GM13976 (cell line): ENCODE measurements at regions of chr15 and their contacts with region 1.

Region 1: DNA sequence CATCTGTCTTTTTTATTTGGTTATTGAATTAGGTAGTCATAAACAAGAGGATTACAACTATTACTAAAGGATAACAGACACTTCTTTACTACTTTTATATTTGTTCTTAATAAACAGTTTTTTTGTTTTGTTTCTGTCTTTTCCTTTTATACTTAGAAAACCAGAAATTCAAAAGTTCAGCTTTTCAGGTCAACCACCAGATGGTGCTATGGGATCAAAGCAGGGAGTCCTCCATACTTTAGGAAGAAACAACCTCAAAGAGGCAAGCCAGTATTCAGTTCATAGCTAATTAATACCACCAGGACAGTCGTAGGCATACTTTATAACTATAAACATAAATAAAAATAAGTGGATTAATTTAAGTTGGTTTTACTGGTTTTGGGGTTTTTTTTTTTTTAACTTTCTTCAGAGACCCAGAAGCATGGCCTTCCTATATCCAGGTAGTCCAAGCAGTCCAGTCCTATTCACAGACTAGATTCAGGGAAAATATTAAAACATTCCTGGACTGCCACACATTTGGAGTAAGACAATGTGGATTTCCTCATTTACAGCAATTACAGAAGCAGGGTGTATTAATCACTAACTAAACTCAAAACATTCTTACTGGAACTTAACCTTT is 16.0 kb upstream of the EID1 start:
- DNase-seq: peak; percentile 59
- CTCF ChIP-seq: peak; percentile 55

Region 2: DNA sequence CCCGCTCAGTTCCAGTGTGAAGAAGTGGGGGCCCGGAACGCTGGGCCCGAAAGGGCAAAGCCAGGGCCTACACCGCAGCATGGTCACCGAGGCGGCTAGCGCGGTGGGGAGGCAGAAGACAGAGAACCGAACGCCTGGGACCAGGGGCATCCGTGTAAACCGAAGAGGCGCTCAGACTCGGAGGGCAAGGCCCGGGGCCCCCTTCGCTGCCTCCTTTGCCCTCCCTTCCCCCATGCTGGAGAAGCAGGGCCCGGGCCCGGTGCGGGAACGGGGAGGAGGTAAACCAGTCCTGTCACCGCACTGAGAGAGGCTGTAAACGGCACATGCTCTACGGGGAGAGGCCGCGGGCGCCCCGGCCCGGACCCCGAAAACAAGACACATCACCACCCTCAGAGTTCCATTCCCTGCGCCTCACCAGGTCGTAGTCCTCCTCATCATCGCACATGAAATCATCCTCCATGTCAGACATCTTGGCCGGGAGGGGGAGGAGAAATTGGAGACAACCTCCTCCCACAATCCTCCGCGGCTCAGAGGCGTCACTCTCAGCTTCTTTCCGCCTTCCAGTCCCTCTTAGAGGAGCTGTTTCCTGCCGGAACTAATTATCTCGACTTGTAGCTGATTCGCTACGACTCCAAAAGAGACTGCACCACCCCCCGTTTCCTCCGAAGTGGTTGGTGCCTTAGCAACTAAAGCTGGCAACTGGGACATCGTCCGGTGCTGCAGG is 293.4 kb after region 1 on chr15 and contains the start of gene COPS2:
- in situ Hi-C with region 1: loop called (anchors 10 kb)
- DNase-seq: peak; percentile 87
- CTCF ChIP-seq: no peak

Region 3: DNA sequence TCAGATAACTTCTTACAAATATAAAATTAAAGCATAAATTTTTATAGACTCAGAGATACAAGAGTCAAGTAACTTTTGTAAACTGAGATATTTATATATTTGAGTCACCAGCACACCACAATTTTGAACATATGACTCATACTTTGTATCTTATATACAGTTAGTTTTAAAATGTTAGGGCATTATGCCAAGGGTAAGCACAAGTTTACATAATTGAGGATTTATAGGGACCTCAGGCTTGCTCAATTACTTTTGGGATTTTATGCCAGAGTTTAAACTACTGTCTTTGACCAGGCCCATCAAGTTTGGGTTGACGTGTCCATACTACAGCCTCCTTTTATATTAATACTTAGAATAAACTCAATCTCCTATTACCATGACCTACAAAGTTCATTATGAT is 553.7 kb after region 1 on chr15:
- in situ Hi-C with region 1: loop called (anchors 10 kb)
- DNase-seq: no peak
- CTCF ChIP-seq: no peak

Region 4: DNA sequence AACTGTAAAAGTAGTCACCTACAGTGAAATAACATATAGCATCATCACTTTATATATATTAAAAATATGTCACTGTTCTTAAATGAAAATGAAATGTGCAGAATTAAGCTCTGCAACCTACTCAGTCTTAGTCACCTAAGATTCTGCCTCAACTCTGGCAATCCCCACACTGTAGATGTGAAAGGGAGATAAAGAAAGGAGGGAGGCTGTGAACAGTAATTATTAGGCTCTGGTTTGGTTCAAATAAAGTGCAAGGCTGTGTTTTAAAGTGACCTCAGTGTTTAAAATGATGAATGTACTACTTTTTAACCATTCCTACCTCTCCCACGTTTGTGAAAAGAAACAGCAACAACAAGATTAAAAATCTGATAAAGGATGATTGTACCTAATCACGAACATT is 1184.9 kb after region 1 on chr15:
- in situ Hi-C with region 1: loop called (anchors 25 kb)
- DNase-seq: no peak
- CTCF ChIP-seq: no peak

Region 5: GRCh38 chr15:50145451-50145872 is 1283.5 kb after region 1 on chr15:
- in situ Hi-C with region 1: loop called (anchors 25 kb)
- DNase-seq: peak; percentile 24
- CTCF ChIP-seq: no peak